PC-9 (cell line): ENCODE measurements at regions of chr15 and their contacts with region 1.

Region 1: DNA sequence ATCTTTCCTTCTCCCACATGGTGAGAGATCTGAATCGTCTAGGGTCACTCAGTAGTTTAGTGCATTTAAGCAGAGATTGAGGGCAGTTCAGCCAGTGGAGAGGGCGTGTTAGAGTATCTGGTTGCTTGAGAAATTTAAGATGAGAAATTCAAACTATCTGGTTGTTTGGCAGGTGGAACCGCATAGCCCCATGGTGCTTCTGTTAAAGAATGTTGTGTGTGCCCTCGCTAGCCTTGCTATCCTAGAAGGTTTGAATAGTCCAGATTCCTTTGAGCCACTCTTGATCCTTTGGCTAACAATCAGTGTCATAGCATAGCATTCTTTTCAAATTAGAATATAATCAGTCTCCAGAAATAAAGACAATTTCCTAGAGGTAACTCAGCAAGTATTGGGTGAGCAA is 32.1 kb downstream of the ABHD17C start:
- DNase-seq: peak; percentile 68 to 89
- H3K4me3 ChIP-seq: no peak overlapping the region
- H3K27ac ChIP-seq: peak overlapping the region; percentile 67
- H3K4me1 ChIP-seq: peaks cover 18% of the 10 kb centered on the region
- H3K27me3 ChIP-seq: no peaks in the 10 kb centered on the region
- CTCF ChIP-seq: no peak

Region 2: GRCh38 chr15:79071901-79072300 is 1655.3 kb before region 1 on chr15:
- CTCF ChIA-PET with region 1: no interaction called
- POLR2A ChIA-PET with region 1: no interaction called
- intact Hi-C with region 1: no loop called
- DNase-seq: no peak
- H3K4me3 ChIP-seq: no peak overlapping the region
- H3K27ac ChIP-seq: no peak overlapping the region
- H3K4me1 ChIP-seq: peaks cover 13% of the 10 kb centered on the region
- H3K27me3 ChIP-seq: no peaks in the 10 kb centered on the region
- CTCF ChIP-seq: no peak

Region 3: GRCh38 chr15:80556694-80557367 is 170.4 kb before region 1 on chr15:
- CTCF ChIA-PET with region 1: no interaction called
- POLR2A ChIA-PET with region 1: no interaction called
- intact Hi-C with region 1: no loop called
- DNase-seq: no peak
- H3K4me3 ChIP-seq: no peak overlapping the region
- H3K27ac ChIP-seq: no peak overlapping the region
- H3K4me1 ChIP-seq: no peaks in the 10 kb centered on the region
- H3K27me3 ChIP-seq: no peaks in the 10 kb centered on the region
- CTCF ChIP-seq: no peak

Region 4: GRCh38 chr15:80709561-80709960 is 17.6 kb before region 1 on chr15:
- CTCF ChIA-PET with region 1: no interaction called
- POLR2A ChIA-PET with region 1: no interaction called
- intact Hi-C with region 1: loop called (anchors 2 kb)
- DNase-seq: peak; percentile 76
- H3K4me3 ChIP-seq: no peak overlapping the region
- H3K27ac ChIP-seq: peak overlapping the region; percentile 66
- H3K4me1 ChIP-seq: peaks cover 24% of the 10 kb centered on the region
- H3K27me3 ChIP-seq: no peaks in the 10 kb centered on the region
- CTCF ChIP-seq: no peak